ENCODE measurements at regions of chr1 and their contacts with region 1.

Region 1: GRCh38 chr1:65459397-65459768 is 38.9 kb downstream of the LEPR start:
- DNase-seq: peak; percentile 57
- H3K4me3 Mint-ChIP-seq: no peak overlapping the region
- H3K27ac Mint-ChIP-seq: peak overlapping the region; percentile 31
- H3K4me1 Mint-ChIP-seq: peaks cover 16% of the 10 kb centered on the region
- H3K27me3 Mint-ChIP-seq: no peaks in the 10 kb centered on the region
- CTCF ChIP-seq: peak; percentile 54

Region 2: DNA sequence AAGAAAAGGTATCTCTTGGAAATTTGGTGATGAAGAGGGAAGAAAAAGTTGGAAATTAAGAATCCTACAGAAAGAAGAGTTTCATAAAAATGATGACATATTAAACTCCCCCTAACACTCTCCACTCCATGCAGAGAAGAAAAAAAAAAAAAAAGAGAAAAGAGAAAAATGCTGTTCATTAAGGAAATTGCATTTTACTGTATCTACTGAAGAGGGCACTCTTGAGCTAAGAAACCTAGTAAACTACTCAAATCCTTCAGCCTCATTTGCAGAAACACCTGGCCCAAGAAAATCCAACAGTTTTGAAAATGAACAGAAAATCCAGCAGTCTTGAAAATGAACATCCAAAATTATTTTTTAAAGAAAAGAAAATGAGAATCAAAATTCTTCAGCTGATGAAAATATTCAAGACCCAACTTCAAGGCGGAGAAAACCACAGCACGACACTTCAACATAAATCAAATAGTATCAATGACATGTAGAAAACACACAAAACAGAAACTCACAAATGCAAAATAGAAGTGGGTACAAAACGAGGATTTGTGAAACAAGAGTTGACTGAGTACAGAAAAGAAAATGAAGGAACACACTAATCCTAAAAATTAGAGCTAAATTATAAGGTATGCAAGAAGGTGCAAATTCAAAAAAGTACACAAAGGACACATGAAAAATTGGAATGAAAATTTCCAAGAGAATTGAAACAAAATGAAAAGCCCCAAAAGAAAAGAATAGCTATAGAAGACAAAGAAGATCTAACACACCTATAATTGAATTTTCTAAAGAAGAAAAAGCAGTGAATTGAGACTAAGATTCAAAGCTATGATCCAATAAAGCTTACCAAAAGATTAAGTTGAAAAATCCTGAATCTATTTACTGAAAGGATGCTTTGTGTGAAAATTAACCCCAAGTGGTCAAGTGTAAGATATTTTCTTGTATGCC is 223.2 kb before region 1 on chr1:
- CTCF ChIA-PET with region 1: interaction called, 10 read pairs
- POLR2A ChIA-PET with region 1: interaction called, 7 read pairs
- intact Hi-C with region 1: no loop called
- DNase-seq: peak; percentile 72
- H3K4me3 Mint-ChIP-seq: no peak overlapping the region
- H3K27ac Mint-ChIP-seq: no peak overlapping the region
- H3K4me1 Mint-ChIP-seq: peaks cover 2% of the 10 kb centered on the region
- H3K27me3 Mint-ChIP-seq: no peaks in the 10 kb centered on the region
- CTCF ChIP-seq: peak; percentile 68

Region 3: DNA sequence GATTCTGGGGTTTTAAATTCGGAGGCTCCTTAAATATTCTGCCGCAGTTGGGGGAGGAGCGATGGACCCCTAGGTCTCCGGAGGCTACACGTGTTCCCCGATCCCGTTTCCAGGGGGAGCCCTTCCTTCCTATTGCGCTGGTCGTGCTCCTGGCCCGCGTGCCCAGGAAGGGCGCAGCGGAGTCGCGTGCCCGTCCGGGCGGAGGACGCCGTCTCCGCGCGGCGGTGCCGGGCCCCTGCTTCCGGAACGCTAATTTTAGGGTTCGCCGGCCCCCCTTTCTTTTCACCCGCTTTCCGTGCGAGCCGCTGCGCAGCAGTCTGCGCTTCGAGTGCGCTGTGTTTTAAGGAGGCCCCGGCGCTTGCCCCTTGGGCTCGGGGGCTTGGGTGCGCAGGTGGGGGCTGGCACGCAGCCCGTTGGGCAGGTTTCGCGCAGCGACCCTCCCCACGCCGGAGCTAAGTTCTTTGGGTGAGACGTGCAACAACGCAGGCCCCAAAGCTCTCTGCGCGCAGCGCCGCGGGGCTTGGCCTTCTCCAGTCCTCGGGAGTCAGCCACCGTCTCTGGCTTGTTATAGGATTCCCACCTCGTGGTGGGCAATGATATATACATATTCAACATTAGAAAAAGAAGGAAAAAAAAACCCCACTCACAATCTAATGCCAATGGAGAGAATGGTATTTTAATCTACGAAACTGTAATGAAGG is 193.6 kb before region 1 on chr1:
- CTCF ChIA-PET with region 1: interaction called, 11 read pairs
- POLR2A ChIA-PET with region 1: interaction called, 3 read pairs
- intact Hi-C with region 1: no loop called
- DNase-seq: peak; percentile 42
- H3K4me3 Mint-ChIP-seq: peak overlapping the region; percentile 60
- H3K27ac Mint-ChIP-seq: no peak overlapping the region
- H3K4me1 Mint-ChIP-seq: peaks cover 9% of the 10 kb centered on the region
- H3K27me3 Mint-ChIP-seq: no peaks in the 10 kb centered on the region
- CTCF ChIP-seq: no peak

Region 4: DNA sequence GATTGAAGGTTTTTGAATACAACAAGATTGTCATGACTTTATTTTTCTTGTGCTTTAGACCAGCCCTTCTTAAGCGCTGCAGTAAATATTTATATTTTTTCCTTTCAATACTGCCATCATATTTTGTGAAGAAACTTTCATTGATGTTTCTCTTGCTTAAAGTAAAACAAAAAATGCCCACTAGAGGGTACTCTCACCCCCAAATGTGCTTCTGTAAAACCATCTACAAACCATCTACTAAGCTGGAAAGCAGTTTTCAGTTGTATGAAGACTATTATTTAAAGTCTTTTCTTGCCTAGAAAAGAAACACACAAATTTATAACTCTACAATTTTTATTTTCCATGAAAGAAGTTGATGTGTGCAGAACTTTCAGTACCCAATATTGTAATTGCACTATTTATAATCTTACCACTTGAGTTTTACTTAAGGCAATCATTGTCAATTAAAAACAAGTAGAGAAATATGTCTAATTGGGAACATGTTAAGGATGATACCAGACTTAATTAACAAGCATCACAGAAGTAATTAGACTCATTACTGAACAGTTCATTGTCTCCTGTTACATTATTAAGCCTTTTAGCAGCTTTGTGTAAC is 28.2 kb before region 1 on chr1:
- CTCF ChIA-PET with region 1: interaction called, 46 read pairs
- POLR2A ChIA-PET with region 1: interaction called, 6 read pairs
- intact Hi-C with region 1: no loop called
- DNase-seq: peak; percentile 60
- H3K4me3 Mint-ChIP-seq: peak overlapping the region; percentile 76
- H3K27ac Mint-ChIP-seq: peak overlapping the region; percentile 93
- H3K4me1 Mint-ChIP-seq: peaks cover 44% of the 10 kb centered on the region
- H3K27me3 Mint-ChIP-seq: no peaks in the 10 kb centered on the region
- CTCF ChIP-seq: peak; percentile 44

Region 5: DNA sequence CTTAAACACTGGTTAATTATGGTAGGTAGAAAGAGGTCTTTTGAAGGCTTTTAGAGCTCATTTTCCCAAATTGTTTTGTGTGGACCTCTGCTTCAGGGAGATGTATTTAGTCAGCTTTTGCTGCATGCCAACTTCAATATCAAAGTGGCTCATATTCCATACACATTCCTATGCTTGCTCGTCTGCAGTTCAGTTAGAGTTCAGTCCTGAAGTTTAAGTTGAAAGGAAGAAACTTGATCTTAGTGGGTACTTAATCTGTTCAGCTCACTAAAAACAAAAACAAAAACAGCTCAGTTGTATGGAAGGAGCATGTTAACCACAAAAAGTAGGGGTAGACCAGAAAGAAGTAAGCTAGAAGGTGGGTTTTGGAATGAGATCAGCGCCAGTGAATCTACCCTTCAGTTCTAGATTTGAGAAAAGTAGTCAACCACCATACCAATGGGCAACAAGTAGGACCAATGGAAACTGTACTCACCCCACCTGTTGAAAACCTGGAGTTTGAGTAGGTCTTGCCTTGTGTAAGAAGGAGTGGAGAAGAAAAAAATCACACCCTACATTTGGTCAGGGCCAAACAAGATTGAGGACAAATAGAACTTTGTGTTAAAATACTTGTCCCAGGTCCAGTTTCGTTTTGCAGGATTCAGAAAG is 19.1 kb after region 1 on chr1:
- CTCF ChIA-PET with region 1: interaction called, 15 read pairs
- POLR2A ChIA-PET with region 1: interaction called, 3 read pairs
- intact Hi-C with region 1: no loop called
- DNase-seq: no peak
- H3K4me3 Mint-ChIP-seq: no peak overlapping the region
- H3K27ac Mint-ChIP-seq: no peak overlapping the region
- H3K4me1 Mint-ChIP-seq: peaks cover 8% of the 10 kb centered on the region
- H3K27me3 Mint-ChIP-seq: no peaks in the 10 kb centered on the region
- CTCF ChIP-seq: no peak

Measured in MCF 10A (cell line).